Calu3 (cell line): ENCODE measurements at regions of chr1 and their contacts with region 1.

Region 1: DNA sequence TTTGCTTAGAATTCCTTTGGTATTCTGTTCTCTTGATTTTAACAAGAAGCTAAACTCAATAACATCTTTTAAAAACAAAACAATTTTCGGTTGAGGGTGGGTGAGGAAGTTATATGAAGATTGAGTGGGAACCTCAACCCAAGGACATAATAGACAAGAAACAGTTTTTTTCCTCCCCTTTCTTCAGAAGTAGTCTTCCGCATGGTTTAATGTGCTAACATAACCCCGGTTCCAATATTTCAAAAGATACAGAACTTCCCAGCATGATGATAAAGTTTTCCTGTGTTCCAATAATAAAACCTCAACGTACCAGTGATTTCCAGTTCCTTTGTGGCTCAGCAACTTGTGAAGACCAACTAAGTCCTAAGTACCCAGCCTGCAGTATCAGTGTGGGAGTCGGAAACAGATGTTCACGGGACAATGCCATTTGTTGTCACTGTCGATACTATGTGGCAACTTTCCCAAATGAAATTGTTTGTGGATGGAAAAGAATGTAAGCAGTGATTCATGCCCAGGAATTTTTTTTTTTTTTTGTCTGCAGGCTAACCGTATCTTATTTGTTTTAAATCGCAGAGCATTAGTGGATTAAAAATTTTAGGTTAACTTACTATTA is 48.5 kb downstream of the NR5A2 start:
- DNase-seq: peak; percentile 59
- H3K4me3 Mint-ChIP-seq: peak overlapping the region; percentile 34
- H3K27ac Mint-ChIP-seq: peak overlapping the region; percentile 10
- H3K4me1 Mint-ChIP-seq: peaks cover 20% of the 10 kb centered on the region
- H3K27me3 Mint-ChIP-seq: no peaks in the 10 kb centered on the region
- CTCF ChIP-seq: no peak

Region 2: DNA sequence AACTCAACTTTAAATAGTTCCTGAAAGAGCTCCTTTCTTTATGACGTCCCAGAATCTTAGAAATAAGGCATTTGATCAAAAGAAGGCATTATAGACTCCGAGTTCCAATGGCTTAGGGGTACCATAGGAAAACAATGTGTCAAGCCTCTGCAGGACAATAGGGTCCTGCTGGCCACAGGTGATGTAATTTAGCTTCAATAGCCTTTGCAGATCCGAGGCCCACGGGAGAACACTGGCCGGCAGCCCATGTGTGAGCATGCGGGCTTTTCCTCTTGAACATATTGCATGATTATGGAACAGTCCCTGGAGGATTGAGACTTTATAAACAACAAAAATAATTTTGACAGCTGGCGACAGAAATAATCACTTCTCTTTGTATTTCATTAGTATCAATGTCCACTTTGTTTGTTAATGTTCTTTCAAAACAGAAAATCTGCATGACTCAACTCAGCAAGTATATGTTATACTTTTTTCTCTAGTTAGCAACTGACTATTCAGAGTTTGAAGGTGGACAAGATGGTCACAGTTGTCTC is 97.6 kb before region 1 on chr1:
- CTCF ChIA-PET with region 1: no interaction called
- intact Hi-C with region 1: no loop called
- DNase-seq: no peak
- H3K4me3 Mint-ChIP-seq: no peak overlapping the region
- H3K27ac Mint-ChIP-seq: no peak overlapping the region
- H3K4me1 Mint-ChIP-seq: peaks cover 22% of the 10 kb centered on the region
- H3K27me3 Mint-ChIP-seq: no peaks in the 10 kb centered on the region
- CTCF ChIP-seq: no peak

Region 3: DNA sequence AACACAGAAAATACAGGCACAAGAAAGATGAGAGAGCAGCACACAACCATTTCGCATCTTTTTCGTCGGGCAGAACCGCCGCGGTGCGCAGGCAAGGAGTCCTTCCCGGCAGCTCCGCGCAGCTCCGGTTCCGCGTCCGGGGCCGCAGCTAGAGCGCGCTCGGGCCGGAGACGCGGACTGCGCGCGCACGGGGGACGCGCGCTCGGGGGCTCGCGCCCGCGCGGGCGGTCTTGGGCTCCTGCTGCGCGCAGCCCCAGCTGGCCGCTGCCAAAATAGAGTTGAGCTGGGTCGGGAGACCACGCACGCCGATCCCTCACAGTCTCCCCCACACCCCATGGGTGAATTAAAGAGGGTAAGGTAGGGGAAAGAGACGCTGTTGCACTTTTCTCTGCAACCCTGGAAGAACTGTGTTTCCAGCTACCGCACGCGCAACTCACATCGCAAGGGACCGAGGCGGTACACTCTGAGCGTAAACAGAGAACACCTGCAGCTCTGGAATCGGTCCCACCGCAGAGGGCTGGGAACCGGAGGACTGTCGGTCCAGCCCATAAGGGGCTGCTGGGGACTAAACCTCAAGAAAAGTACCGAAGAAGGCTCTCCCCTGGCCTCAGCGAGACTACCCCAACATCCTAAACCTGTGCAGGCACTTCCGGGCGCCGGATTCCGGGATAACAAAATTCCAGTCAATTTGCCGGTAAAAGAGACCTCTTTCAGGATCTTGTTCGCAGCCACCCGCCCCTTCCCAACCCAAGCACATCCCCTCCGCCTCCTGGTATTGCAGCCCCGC is 46.8 kb before region 1 on chr1:
- CTCF ChIA-PET with region 1: no interaction called
- intact Hi-C with region 1: loop called (anchors 5 kb)
- DNase-seq: peak; percentile 82
- H3K4me3 Mint-ChIP-seq: peak overlapping the region; percentile 80
- H3K27ac Mint-ChIP-seq: peak overlapping the region; percentile 73
- H3K4me1 Mint-ChIP-seq: peaks cover 27% of the 10 kb centered on the region
- H3K27me3 Mint-ChIP-seq: no peaks in the 10 kb centered on the region
- CTCF ChIP-seq: no peak

Region 4: DNA sequence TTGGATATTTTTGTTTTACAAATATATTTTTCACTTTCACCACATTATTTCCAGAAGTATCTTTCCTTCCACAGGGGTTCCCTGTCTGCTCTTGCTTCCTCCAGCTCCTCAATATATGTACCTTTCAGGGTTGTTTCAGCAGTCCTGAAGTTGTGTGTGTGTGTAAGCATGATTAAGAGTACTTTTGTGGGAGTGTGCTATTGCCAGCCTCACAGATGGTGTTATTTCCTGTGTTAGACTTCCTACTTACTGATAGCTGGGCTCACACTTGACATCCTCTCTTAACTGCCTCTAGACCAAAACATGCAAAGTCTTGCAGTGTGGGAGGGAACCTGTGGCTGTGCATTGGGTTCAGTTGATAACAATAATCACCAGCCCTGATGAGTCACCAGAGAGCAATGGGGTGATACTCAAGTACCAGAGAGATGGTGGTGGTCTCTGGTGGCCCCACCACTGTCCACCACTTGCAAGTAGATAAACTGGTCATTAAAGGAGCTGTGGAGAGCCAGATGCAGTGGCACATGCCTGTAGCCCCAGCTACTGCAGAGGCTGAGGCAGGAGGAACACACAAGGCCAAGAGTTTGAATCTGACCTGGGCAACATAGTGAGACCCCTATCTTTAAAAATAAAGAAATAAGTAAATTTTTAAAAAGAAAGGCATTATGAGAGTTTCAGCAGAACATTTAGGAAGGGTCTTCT is 78.2 kb after region 1 on chr1:
- CTCF ChIA-PET with region 1: no interaction called
- intact Hi-C with region 1: no loop called
- DNase-seq: no peak
- H3K4me3 Mint-ChIP-seq: no peak overlapping the region
- H3K27ac Mint-ChIP-seq: no peak overlapping the region
- H3K4me1 Mint-ChIP-seq: peaks cover 17% of the 10 kb centered on the region
- H3K27me3 Mint-ChIP-seq: no peaks in the 10 kb centered on the region
- CTCF ChIP-seq: no peak